ENCODE measurements at regions of chr14 and their contacts with region 1.

Region 1: GRCh38 chr14:78598041-78598920 is 428.1 kb downstream of the NRXN3 start:
- DNase-seq: peak; percentile 16
- H3K4me3 ChIP-seq: no peak overlapping the region
- H3K27ac ChIP-seq: no peak overlapping the region
- H3K4me1 ChIP-seq: no peaks in the 10 kb centered on the region
- H3K27me3 ChIP-seq: no peaks in the 10 kb centered on the region
- CTCF ChIP-seq: peak; percentile 91 to 96

Region 2: GRCh38 chr14:77654001-77654441 is 944.3 kb before region 1 on chr14:
- CTCF ChIA-PET with region 1: no interaction called
- dilution Hi-C with region 1: no loop called
- in situ Hi-C with region 1: no loop called
- intact Hi-C with region 1: loop called (anchors 2 kb)
- DNase-seq: no peak
- H3K4me3 ChIP-seq: no peak overlapping the region
- H3K27ac ChIP-seq: no peak overlapping the region
- H3K4me1 ChIP-seq: no peaks in the 10 kb centered on the region
- H3K27me3 ChIP-seq: no peaks in the 10 kb centered on the region
- CTCF ChIP-seq: no peak

Region 3: DNA sequence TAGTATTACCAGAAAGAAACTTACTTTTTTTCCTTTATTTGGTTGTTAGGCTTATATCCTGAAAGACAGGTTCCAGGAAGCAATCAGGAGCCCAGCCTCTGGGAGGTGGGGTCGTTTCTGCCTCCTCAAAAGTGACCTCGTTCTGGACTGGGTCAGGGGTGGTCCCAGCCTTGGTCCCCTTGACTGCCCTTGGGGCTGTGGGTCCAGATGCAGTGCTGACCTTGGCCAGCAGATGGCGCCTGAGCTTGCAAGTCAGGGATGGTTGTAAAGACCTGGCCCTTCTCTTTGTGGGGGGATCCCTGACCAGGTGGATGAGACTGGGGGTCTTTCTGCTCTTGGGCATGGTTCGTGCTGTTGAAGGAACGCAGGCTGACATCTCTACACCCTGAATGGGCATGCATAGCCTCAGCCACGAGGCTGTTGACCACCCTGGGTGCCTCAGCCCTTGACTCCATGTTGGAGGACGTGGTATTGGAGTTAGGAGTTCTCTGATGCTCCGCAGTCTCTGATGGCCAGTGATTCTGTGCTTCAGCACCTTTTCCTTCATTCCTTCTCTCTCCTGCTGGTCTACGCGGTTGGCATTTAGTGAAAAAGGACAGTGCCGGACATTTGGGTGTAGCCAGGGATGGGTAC is 736.0 kb before region 1 on chr14:
- CTCF ChIA-PET with region 1: no interaction called
- dilution Hi-C with region 1: no loop called
- in situ Hi-C with region 1: loop called (anchors 10 to 25 kb)
- intact Hi-C with region 1: loop called (anchors 1 kb)
- DNase-seq: peak; percentile 21
- H3K4me3 ChIP-seq: no peak overlapping the region
- H3K27ac ChIP-seq: no peak overlapping the region
- H3K4me1 ChIP-seq: no peaks in the 10 kb centered on the region
- H3K27me3 ChIP-seq: no peaks in the 10 kb centered on the region
- CTCF ChIP-seq: peak; percentile 92 to 99

Region 4: GRCh38 chr14:78566026-78566858 is 32.0 kb before region 1 on chr14:
- CTCF ChIA-PET with region 1: no interaction called
- dilution Hi-C with region 1: no loop called
- in situ Hi-C with region 1: no loop called
- intact Hi-C with region 1: no loop called
- DNase-seq: peak; percentile 49
- H3K4me3 ChIP-seq: no peak overlapping the region
- H3K27ac ChIP-seq: no peak overlapping the region
- H3K4me1 ChIP-seq: no peaks in the 10 kb centered on the region
- H3K27me3 ChIP-seq: no peaks in the 10 kb centered on the region
- CTCF ChIP-seq: peak; percentile 43 to 75

Region 5: GRCh38 chr14:78581229-78581628 is 17.1 kb before region 1 on chr14:
- CTCF ChIA-PET with region 1: no interaction called
- dilution Hi-C with region 1: no loop called
- in situ Hi-C with region 1: no loop called
- intact Hi-C with region 1: no loop called
- DNase-seq: no peak
- H3K4me3 ChIP-seq: no peak overlapping the region
- H3K27ac ChIP-seq: no peak overlapping the region
- H3K4me1 ChIP-seq: no peaks in the 10 kb centered on the region
- H3K27me3 ChIP-seq: no peaks in the 10 kb centered on the region
- CTCF ChIP-seq: no peak